AG04449 (cell line): ENCODE measurements at regions of chr2 and their contacts with region 1.

Region 1: DNA sequence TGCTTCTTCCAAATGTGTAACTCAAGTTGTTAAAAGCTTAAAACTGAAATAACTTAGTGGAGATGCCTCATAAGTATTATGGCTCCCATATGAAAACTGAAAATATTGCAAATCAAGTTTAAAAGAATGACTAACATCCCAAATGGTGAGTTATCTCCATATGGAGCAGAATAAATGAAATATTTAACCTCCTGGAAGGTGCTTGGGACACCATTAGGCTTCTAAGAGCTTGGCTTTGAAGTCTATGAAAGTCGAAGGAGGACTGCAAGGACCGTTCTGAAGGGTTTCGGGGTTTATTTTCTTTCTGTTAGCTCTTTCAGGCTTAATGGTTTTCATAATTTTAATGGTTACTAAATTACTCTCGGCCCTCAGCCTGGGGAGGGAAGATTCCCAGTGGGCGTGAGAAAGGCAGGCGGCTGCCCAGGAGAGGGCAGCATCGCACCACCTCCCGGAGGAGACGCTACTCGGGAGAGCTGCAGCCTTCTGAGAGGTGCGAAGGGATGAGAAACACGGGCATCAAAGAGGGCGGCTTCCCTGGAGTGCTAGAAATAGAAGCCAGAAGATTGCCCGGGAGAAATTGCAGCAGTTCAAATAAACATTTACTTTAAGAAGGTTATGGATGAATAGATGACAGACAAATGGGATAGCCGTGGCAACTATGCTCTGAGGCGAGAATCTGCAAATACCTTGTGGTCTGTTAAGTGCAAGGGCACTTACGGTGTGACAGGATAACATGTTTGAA is 43.1 kb downstream of the MAP3K19 start:
- DNase-seq: peak; percentile 4
- H3K4me3 ChIP-seq: no peak overlapping the region
- CTCF ChIP-seq: peak; percentile 95

Region 2: GRCh38 chr2:134988994-134989605 is 15.1 kb before region 1 on chr2:
- CTCF ChIA-PET with region 1: interaction called, 98 read pairs
- POLR2A ChIA-PET with region 1: no interaction called
- DNase-seq: no peak
- H3K4me3 ChIP-seq: no peak overlapping the region
- CTCF ChIP-seq: peak; percentile 9

Region 3: DNA sequence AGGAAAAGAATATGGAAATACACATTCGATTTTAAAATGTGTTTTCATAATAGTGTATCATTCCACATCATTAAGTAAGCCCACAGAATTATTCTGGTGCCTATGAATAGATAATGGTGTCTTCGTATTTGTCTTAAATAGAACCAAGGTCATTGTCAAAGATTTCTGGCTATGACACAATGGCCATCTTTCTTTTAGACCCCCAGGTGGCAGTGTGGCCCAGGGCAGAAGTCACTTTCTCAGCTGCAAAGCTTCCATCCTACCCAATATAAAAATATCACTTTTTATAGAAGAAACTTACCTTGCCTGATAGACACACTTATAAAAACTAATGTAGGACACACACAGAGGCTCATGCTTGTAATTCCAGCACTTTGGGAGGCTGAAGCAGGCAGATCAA is 469.4 kb after region 1 on chr2:
- CTCF ChIA-PET with region 1: interaction called, 11 read pairs
- POLR2A ChIA-PET with region 1: no interaction called
- DNase-seq: no peak
- H3K4me3 ChIP-seq: no peak overlapping the region
- CTCF ChIP-seq: peak; percentile 33

Region 4: GRCh38 chr2:135600915-135601314 is 596.7 kb after region 1 on chr2:
- CTCF ChIA-PET with region 1: interaction called, 52 read pairs
- POLR2A ChIA-PET with region 1: no interaction called
- DNase-seq: no peak
- H3K4me3 ChIP-seq: no peak overlapping the region
- CTCF ChIP-seq: no peak

Region 5: GRCh38 chr2:135709992-135710391 is 705.8 kb after region 1 on chr2:
- CTCF ChIA-PET with region 1: interaction called, 131 read pairs
- POLR2A ChIA-PET with region 1: no interaction called
- DNase-seq: no peak
- H3K4me3 ChIP-seq: no peak overlapping the region
- CTCF ChIP-seq: peak; percentile 91